ENCODE measurements at regions of chr22 and their contacts with region 1.

Region 1: DNA sequence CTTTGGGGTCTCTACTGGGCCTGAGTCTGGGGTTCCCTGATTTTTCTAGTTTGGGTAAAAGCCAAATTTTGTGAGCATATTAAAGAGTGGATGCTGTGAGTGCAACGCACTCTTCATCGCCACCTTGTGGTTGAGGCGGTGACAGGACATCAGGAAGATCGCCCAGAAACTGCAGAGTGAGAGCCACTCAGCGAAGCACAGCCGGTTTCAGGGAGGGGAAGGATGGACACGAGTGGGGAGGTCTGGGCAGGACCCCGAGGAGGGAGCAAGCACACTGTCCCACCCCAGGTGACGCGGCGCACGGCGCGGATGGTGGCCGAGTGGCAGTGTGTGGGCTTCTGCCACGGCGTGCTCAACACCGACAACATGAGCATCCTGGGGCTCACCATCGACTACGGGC is 9.1 kb downstream of the SELENOO start:
- DNase-seq: peak; percentile 74
- ATAC-seq: peak; percentile 41

Region 2: DNA sequence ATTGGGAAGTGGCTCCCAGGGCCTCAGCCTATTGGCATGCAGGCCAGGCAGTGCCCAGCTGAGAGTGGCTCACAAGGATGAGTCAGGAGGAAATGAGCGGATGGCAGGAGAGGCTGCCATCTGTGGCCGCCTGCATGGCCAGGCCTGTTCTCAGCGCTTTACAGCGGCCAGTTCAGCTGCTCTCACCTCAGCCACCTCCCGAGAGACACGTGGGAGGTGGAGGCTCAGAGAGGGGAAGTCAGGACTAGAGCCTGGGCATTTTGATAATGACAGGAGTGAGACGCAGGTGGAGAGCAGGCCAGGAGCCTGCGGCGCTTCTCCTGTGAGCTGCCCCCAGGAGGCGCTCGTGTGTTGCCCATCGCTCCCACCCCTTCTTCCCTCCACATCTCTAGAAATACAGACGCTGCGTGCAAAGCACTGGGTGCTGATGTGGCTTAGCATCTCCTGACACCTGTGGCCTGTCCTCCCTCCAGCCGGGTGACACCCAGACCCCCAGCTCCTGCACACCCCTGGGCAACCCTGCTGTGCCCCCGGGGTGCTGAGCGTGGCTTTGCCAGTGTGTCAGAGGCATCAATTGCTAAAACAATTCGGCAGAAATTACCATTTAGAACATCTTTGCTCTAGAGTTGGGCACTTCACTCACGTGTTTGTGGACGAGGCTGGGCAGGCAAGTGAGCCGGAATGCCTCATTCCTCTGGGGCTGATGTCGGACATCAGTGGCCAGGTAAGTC is 60.7 kb before region 1 on chr22:
- intact Hi-C with region 1: loop called (anchors 10 kb)
- DNase-seq: peak; percentile 70
- ATAC-seq: peak; percentile 76

Region 3: GRCh38 chr22:50260801-50261614 is 51.1 kb after region 1 on chr22:
- intact Hi-C with region 1: no loop called
- DNase-seq: peak; percentile 76
- ATAC-seq: peak; percentile 14

Measured in left ventricle myocardium superior (tissue), 1 donor.